ENCODE measurements at regions of chr1 and their contacts with region 1.

Region 1: GRCh38 chr1:91511386-91511785 is 10.7 kb downstream of the CDC7 start:
- DNase-seq: no peak
- H3K4me3 ChIP-seq: no peak overlapping the region
- H3K27ac ChIP-seq: no peak overlapping the region
- H3K4me1 ChIP-seq: no peaks in the 10 kb centered on the region
- H3K27me3 ChIP-seq: no peaks in the 10 kb centered on the region
- CTCF ChIP-seq: peak in 2 of 3 donors; percentile 52 to 72
- EP300 ChIP-seq: no peak
- POLR2A ChIP-seq: no peak

Region 2: DNA sequence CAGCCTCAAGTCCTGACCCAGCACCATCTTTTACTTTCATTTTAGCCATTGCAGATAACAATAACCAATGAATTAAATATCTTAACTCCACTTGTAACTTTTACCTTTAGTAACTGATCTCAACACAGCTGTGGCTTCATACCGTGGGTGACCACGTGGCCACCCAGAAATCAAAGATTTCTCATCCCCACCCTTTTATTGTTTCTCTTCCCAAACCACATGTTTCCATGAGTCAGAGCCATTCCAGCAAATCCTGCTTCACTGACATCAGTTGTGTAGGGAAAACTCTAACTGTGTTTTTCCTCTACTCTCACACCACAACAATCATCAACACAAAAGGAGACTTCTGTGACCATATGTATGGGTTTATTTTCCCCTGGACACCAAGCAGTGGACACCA is 412.8 kb after region 1 on chr1:
- intact Hi-C with region 1: loop called (anchors 2 to 5 kb)
- DNase-seq: no peak
- H3K4me3 ChIP-seq: no peak overlapping the region
- H3K27ac ChIP-seq: no peak overlapping the region
- H3K4me1 ChIP-seq: no peaks in the 10 kb centered on the region
- H3K27me3 ChIP-seq: no peaks in the 10 kb centered on the region
- CTCF ChIP-seq: no peak
- EP300 ChIP-seq: no peak
- POLR2A ChIP-seq: no peak

Region 3: DNA sequence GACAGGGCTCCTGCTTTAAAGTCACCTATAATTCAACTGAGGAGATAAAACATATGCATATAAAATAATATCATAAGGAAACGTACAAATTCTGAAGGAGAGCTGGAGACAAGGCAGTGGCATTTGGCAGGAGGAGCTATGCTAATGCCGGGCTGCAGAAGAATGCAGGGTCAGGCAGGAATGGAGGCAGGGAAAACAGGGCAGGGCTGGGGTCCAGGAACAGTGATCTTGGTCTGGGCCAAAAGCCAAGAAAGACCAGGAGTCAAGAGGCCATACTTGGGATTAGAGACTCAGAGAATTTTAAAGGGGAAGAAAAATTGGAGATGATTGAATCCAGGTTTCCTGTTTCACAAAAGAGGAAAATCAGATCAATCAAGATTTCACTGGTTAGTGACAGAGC is 417.9 kb after region 1 on chr1:
- intact Hi-C with region 1: loop called (anchors 2 to 5 kb)
- DNase-seq: peak in 4 of 5 donors; percentile 36 to 62 (median 40)
- H3K4me3 ChIP-seq: no peak overlapping the region
- H3K27ac ChIP-seq: no peak overlapping the region
- H3K4me1 ChIP-seq: no peaks in the 10 kb centered on the region
- H3K27me3 ChIP-seq: no peaks in the 10 kb centered on the region
- CTCF ChIP-seq: no peak
- EP300 ChIP-seq: no peak
- POLR2A ChIP-seq: no peak